H1 (cell line): ENCODE measurements at regions of chr7 and their contacts with region 1.

Region 1: DNA sequence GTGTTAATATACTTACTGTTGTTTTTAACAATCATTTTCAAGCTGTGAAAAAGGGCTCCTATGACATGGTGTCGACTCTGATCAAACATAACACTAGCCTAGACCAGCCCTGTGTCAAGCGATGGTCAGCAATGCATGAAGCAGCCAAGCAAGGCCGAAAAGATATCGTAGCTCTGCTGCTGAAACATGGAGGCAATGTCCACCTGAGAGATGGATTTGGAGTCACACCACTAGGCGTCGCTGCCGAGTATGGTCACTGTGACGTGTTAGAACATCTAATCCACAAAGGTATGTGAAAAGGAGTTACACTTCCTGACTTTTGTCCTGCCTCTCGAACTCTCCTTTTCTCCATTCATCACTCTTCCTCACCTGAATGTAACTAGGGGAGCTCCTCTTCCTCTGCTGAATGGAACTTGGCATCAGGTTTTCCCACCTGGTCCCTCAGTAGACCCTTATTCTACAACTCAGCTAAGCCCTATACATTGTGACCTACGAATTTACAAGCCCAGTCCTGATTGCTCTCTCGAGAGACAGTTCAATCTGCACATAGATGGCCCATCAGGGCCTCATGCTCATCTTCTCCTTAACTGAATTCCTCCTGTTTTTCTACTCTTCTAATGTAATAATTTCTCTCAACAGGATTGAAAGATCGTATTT is 23.0 kb downstream of the ASB15 start:
- DNase-seq: peak; percentile 36 to 83
- H3K4me3 ChIP-seq: no peak overlapping the region
- H3K27ac ChIP-seq: no peak overlapping the region
- H3K4me1 ChIP-seq: no peaks in the 10 kb centered on the region; a peak in 1 of 7 replicates
- H3K27me3 ChIP-seq: no peaks in the 10 kb centered on the region
- CTCF ChIP-seq: peak; percentile 62 to 98 (median 75)
- EP300 ChIP-seq: no peak
- POLR2A ChIP-seq: no peak
- RAD21 ChIP-seq: peak; percentile 44 to 51; a peak in 3 of 4 replicates

Region 2: DNA sequence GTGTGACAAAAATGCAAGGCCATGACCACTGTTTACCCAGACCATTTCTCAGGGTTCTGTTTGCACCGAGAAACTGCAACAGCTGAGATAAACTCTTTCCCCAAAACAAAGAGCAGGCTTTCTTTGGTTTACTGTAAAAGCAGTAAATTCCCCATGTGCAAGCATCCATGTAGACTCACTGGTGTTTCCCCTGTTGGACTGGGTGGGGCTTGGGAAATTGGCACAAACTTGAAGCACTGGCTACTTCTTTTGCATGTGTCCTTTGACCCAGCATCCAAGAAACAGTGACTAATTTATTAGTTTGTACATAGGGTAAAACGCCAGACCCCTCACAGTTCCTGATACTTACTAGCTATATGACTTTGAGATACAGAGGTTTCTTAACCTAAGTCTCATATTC is 102.6 kb before region 1 on chr7:
- CTCF ChIA-PET with region 1: no interaction called
- POLR2A ChIA-PET with region 1: no interaction called
- DNase-seq: no peak
- H3K4me3 ChIP-seq: no peak overlapping the region
- H3K27ac ChIP-seq: no peak overlapping the region
- H3K4me1 ChIP-seq: no peaks in the 10 kb centered on the region
- H3K27me3 ChIP-seq: no peaks in the 10 kb centered on the region
- CTCF ChIP-seq: no peak
- EP300 ChIP-seq: no peak
- POLR2A ChIP-seq: no peak
- RAD21 ChIP-seq: no peak

Region 3: GRCh38 chr7:123580406-123581161 is 44.1 kb before region 1 on chr7:
- CTCF ChIA-PET with region 1: interaction called, 38 read pairs
- POLR2A ChIA-PET with region 1: no interaction called
- DNase-seq: no peak
- H3K4me3 ChIP-seq: no peak overlapping the region
- H3K27ac ChIP-seq: no peak overlapping the region
- H3K4me1 ChIP-seq: peaks cover 0 to 3% (median 0%) of the 10 kb centered on the region in 4 experiments; a peak in 4 of 7 replicates
- H3K27me3 ChIP-seq: no peaks in the 10 kb centered on the region
- CTCF ChIP-seq: peak in 2 of 3 experiments; percentile 77 to 86; a peak in 3 of 4 replicates
- EP300 ChIP-seq: no peak
- POLR2A ChIP-seq: no peak
- RAD21 ChIP-seq: peak; percentile 90

Region 4: GRCh38 chr7:123608991-123609882 is 15.4 kb before region 1 on chr7:
- CTCF ChIA-PET with region 1: interaction called, 14 read pairs
- POLR2A ChIA-PET with region 1: no interaction called
- DNase-seq: no peak
- H3K4me3 ChIP-seq: no peak overlapping the region
- H3K27ac ChIP-seq: no peak overlapping the region
- H3K4me1 ChIP-seq: no peaks in the 10 kb centered on the region
- H3K27me3 ChIP-seq: no peaks in the 10 kb centered on the region
- CTCF ChIP-seq: no peak
- EP300 ChIP-seq: no peak
- POLR2A ChIP-seq: no peak
- RAD21 ChIP-seq: no peak

Region 5: DNA sequence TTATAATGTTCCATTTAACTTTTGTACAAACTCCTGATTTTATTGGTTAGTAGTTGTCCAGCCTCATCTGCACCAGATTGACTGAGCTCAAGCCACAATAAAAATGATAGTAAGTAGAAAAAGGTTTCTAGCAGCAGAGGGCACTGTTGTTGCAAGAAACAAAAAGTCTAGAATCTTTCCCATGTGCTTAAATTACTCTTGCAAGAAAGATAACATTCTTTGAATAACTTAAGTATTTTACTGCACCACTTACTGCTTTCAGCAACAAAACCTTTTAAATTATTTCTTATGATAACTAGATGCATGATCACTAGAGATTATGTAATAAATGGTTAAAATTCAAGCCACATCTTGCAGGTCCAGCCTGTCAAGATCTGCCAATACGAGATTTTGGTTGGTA is 58.0 kb after region 1 on chr7:
- CTCF ChIA-PET with region 1: interaction called, 11 read pairs
- POLR2A ChIA-PET with region 1: no interaction called
- DNase-seq: no peak
- H3K4me3 ChIP-seq: no peak overlapping the region
- H3K27ac ChIP-seq: no peak overlapping the region
- H3K4me1 ChIP-seq: no peaks in the 10 kb centered on the region
- H3K27me3 ChIP-seq: peaks cover 0 to 1% (median 0%) of the 10 kb centered on the region in 4 experiments; a peak in 1 of 7 replicates
- CTCF ChIP-seq: peak in 2 of 3 experiments; percentile 38 to 40; a peak in 2 of 4 replicates
- EP300 ChIP-seq: no peak
- POLR2A ChIP-seq: no peak
- RAD21 ChIP-seq: peak; percentile 63 to 67